ENCODE measurements at regions of chr17 and their contacts with region 1.

Region 1: GRCh38 chr17:10737168-10737622 is 7.4 kb upstream of the TMEM220 start:
- DNase-seq: no peak
- H3K4me3 ChIP-seq: no peak overlapping the region
- CTCF ChIP-seq: peak; percentile 77

Region 2: GRCh38 chr17:10716218-10716617 is 21.0 kb before region 1 on chr17:
- CTCF ChIA-PET with region 1: interaction called, 14 read pairs
- POLR2A ChIA-PET with region 1: no interaction called
- DNase-seq: no peak
- H3K4me3 ChIP-seq: no peak overlapping the region
- CTCF ChIP-seq: no peak

Region 3: DNA sequence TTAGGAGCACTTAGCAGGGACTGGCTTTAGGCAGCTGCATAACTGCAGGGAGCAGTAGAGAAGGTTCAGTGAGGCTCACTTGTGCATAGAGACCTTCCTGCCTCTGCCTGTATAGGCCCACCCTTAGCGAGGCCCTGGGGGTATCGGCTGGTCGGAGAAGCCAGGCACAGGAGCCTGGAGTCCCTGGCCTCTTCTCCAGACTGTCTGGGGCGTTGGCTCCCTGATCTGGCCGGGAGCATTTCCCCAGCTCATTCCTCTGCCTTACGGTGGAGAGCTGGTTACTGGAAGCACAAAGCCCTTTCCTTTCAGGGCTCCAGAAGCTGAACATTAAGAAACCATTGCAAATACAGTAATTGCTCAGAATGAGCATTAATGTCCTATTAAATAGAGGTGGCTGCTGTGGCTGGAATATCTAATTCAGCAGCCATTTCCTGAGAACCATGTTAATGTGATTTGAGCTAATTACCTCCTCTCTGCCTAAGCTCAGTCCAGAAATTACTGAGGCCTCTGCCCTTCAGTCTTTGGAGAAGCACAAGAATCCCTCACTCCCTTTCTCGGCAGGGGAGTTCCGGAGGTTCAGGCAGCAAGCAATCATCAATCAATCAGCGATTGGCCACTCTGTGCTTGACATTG is 11.5 kb after region 1 on chr17:
- CTCF ChIA-PET with region 1: interaction called, 37 read pairs
- POLR2A ChIA-PET with region 1: no interaction called
- DNase-seq: no peak
- H3K4me3 ChIP-seq: no peak overlapping the region
- CTCF ChIP-seq: no peak

Region 4: GRCh38 chr17:10844621-10845387 is 107.6 kb after region 1 on chr17:
- CTCF ChIA-PET with region 1: interaction called, 128 read pairs
- POLR2A ChIA-PET with region 1: no interaction called
- DNase-seq: peak; percentile 7
- H3K4me3 ChIP-seq: peak overlapping the region; percentile 54
- CTCF ChIP-seq: peak; percentile 89

Region 5: GRCh38 chr17:11986942-11987329 is 1249.7 kb after region 1 on chr17:
- CTCF ChIA-PET with region 1: interaction called, 11 read pairs
- POLR2A ChIA-PET with region 1: no interaction called
- DNase-seq: no peak
- H3K4me3 ChIP-seq: no peak overlapping the region
- CTCF ChIP-seq: peak; percentile 20